AG04449 (cell line): ENCODE measurements at regions of chr9 and their contacts with region 1.

Region 1: GRCh38 chr9:34403554-34404380 is 27.1 kb upstream of the MYORG start:
- DNase-seq: no peak
- H3K4me3 ChIP-seq: no peak overlapping the region
- CTCF ChIP-seq: peak; percentile 92

Region 2: GRCh38 chr9:34376596-34377403 is 27.0 kb before region 1 on chr9 and contains the start of gene MYORG:
- CTCF ChIA-PET with region 1: interaction called, 41 read pairs
- POLR2A ChIA-PET with region 1: no interaction called
- DNase-seq: no peak
- H3K4me3 ChIP-seq: peak within 1 kb of the TSS; percentile 74
- CTCF ChIP-seq: no peak

Region 3: GRCh38 chr9:34430843-34431437 is 27.2 kb after region 1 on chr9:
- CTCF ChIA-PET with region 1: interaction called, 30 read pairs
- POLR2A ChIA-PET with region 1: no interaction called
- DNase-seq: peak; percentile 74
- H3K4me3 ChIP-seq: no peak overlapping the region
- CTCF ChIP-seq: no peak

Region 4: DNA sequence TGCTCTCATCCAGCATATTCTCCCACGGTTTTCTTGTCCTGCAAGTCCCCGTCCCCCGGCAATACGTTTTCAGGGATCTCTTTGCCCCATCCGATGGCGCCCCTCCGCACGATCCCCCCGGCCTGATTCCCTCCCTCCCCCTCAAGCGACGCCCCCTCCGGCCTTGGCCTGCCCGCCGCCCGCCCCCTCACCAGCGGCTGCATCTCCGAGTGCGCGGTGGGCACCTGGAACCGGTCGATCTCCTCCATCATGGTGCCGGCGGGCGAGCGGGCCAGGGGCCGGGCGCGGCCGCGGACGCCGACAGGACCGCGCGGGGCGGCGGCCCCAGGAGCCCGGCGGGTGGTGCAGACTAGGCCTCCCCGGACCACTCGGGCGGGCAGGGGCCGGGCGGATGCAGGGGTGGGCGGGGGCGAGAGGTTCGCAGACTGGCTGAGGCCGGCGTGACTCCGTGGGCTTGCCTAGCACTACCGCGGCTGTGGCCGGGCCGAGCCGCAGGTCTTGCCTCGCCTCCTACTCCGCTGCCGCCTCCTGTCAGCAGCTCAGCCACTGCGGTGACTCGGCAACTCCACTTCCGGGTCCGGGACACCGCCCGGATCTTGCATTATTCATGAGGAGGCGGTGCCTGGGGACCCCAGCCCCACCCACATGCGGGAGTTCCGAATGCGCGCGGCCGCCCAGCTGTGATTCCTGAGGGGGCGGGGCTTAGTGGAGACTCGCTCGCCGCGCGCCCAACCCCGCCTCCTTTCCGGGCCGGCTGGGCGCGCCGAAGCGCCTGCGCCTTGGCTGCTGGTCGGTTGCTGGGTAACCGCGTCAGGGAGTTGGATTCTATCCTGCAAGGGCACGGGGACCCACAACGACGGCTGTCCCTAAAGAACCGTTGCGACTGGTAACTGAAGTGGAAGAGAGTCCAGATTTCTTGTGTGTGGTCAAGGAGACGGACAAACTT is 54.5 kb after region 1 on chr9 and contains the starts of genes DNAI1 and FAM219A:
- CTCF ChIA-PET with region 1: interaction called, 10 read pairs
- POLR2A ChIA-PET with region 1: no interaction called
- DNase-seq: peak; percentile 84
- H3K4me3 ChIP-seq: peak within 1 kb of the TSS; percentile 84
- CTCF ChIP-seq: no peak

Region 5: DNA sequence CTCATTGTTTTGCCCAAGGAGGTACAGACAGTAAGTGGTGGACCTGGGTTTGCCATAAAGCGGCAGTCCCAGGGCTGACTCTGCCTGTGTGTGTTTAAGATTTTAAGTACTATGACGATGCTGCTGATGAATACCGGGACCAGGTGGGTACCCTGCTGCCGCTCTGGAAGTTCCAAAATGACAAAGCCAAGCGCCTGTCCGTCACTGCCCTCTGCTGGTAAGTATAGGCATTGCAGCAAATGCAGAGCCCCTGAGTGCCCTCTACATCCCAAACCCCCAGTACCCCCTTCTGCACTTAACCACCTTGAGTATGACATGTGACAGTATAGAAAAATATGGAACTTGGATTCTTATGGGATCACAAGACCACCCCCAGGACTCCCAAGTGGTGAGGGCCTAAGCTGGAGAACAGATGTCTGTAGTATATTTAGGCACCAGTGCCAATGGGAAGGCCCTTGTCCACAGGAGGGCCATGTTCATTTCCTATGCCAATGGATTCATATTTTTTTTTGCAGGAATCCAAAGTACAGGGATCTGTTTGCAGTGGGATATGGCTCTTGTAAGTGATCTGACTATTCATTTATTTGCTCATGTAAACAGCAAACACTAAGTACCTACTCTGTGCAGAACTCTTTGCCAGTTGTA is 97.0 kb after region 1 on chr9:
- CTCF ChIA-PET with region 1: interaction called, 193 read pairs
- POLR2A ChIA-PET with region 1: no interaction called
- DNase-seq: no peak
- H3K4me3 ChIP-seq: no peak overlapping the region
- CTCF ChIP-seq: peak; percentile 90

Region 6: DNA sequence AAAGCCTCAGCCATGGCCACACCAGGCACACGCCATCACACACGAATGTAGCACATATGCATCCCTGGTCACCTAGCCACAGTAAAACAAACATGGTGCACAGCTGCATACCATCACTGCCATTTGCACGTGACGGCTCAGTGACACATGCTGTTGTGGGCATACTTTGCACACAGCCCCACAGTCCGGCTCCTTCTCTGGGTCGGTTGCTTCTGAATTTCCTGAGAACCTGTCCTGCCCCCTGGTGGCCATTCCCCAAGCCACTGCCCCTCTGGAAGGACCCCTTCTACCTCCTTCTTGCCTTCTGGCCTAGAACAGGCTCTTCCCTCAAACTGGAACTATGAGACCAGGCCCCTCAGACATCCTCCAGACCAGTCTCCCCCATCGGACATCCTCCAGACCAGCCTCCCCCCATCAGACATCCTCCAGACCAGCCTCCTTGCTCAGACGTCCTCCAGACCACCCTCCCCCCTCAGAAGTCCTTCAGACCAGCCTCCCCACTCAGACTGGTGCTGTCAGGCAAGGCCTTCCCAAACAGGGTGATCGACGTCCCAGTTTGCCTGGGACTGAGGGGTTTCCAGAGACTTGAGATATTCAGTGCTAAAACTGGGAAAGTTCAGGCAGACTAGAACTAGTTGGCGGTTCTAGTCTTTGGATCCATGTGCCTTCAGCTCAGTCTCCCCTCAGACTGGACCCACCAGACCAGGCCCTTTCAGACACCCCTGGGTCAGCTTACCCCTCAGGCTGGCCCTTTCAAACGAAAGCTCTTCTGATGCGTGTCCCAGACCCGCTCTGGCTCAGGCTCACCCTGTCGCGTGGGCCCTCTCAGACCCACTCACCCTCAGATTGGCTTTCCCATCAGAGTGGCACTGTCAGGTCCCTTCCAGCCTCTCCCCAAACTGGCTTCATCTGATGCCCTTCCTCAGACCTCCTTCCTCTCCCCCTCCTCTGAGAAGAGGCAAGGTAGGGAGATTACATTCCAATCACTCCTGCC is 143.4 kb after region 1 on chr9:
- CTCF ChIA-PET with region 1: interaction called, 65 read pairs
- POLR2A ChIA-PET with region 1: no interaction called
- DNase-seq: no peak
- H3K4me3 ChIP-seq: no peak overlapping the region
- CTCF ChIP-seq: peak; percentile 60